Heart left ventricle (tissue), 16 donors: ENCODE measurements at regions of chr7 and their contacts with region 1.

Region 1: DNA sequence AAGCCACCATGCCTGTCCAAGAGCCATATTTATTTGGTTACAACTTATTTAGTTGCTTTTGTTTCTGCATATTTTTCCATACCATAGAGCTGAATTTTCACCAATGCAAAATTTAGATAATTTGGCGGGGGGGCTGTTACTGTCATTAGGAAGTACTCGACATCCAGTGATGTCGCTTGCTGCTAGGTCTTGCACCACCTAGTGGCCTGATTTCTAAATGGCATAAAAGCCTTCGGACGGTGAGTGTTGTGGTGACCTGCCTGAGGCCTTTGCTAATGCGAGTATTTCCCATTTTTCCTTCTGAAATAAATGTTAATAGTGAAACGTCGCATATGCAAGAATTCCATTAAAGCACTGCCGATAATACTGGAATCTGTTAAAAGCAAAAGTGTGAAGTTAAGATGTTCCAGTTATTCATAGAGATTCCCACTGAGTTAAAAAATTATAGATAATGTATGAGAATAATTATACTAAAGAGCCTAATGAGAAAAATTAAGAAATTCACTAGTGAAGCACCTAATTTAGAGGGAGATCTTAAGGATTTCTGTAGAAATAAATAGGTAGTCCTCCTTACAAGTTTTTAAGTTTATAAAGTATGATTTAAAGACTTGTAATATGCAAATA is 86.1 kb upstream of the DNAJB6 start:
- DNase-seq: peak in 1 of 5 donors; percentile 39
- ATAC-seq: peak in 3 of 4 donors; percentile 45 to 66 (median 62)
- H3K4me3 ChIP-seq: no peak overlapping the region
- H3K27ac ChIP-seq: no peak overlapping the region
- H3K4me1 ChIP-seq: no peaks in the 10 kb centered on the region
- H3K27me3 ChIP-seq: no peaks in the 10 kb centered on the region
- CTCF ChIP-seq: peak; percentile 52 to 86 (median 74)
- POLR2A ChIP-seq: no peak

Region 2: GRCh38 chr7:156969972-156970420 is 280.7 kb before region 1 on chr7:
- intact Hi-C with region 1: loop called in 1 of 10 experiments (anchors 10 kb)
- DNase-seq: no peak
- ATAC-seq: no peak
- H3K4me3 ChIP-seq: no peak overlapping the region
- H3K27ac ChIP-seq: no peak overlapping the region
- H3K4me1 ChIP-seq: no peaks in the 10 kb centered on the region
- H3K27me3 ChIP-seq: no peaks in the 10 kb centered on the region
- CTCF ChIP-seq: peak in 9 of 12 donors; percentile 9 to 52 (median 44)
- POLR2A ChIP-seq: no peak

Region 3: GRCh38 chr7:157386979-157387800 is 136.5 kb after region 1 on chr7:
- intact Hi-C with region 1: loop called in 1 of 10 experiments (anchors 10 kb)
- DNase-seq: peak; percentile 85 to 92 (median 90)
- ATAC-seq: peak; percentile 85 to 90 (median 87)
- H3K4me3 ChIP-seq: peak overlapping the region in 1 of 12 donors; percentile 13
- H3K27ac ChIP-seq: peak overlapping the region; percentile 33 to 87 (median 58)
- H3K4me1 ChIP-seq: peaks cover 0 to 49% (median 36%) of the 10 kb centered on the region in 12 donors
- H3K27me3 ChIP-seq: no peaks in the 10 kb centered on the region
- CTCF ChIP-seq: peak; percentile 85 to 96 (median 92)
- POLR2A ChIP-seq: no peak

Region 4: GRCh38 chr7:157404845-157405481 is 154.2 kb after region 1 on chr7:
- intact Hi-C with region 1: loop called in 1 of 10 experiments (anchors 5 kb)
- DNase-seq: peak in 2 of 5 donors; percentile 27 to 34
- ATAC-seq: peak; percentile 16 to 32 (median 22)
- H3K4me3 ChIP-seq: no peak overlapping the region
- H3K27ac ChIP-seq: peak overlapping the region in 10 of 12 donors; percentile 1 to 63 (median 43)
- H3K4me1 ChIP-seq: peaks cover 3 to 48% (median 14%) of the 10 kb centered on the region in 12 donors
- H3K27me3 ChIP-seq: no peaks in the 10 kb centered on the region
- CTCF ChIP-seq: no peak
- POLR2A ChIP-seq: no peak